ENCODE measurements at regions of chr17 and their contacts with region 1.

Region 1: DNA sequence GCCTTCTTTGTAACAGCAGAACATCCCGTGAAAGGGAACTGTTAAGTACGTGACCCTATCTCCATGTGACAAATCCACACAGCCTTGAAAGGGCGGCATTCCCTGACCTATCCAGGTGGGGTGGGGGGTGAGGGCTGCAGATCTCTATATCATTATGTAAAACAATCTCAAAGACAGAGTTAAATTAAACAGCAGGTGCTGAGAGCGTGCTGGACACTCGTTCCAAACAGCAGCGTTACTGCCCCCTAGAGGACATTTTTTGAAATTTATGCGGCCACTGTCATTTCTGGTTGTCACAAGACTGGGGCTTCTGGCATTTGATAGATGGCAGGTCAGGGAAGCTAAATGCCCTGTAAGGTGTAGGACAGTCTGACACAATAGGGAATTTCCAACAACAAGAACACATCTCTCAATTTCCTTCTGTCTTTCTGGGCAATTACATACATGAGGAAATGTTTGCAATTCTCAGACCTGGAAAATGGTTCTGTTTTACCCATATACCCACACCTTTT is 6.7 kb upstream of the SLC25A39 start:
- H3K4me3 ChIP-seq: no peak overlapping the region
- H3K27ac ChIP-seq: no peak overlapping the region
- H3K4me1 ChIP-seq: peaks cover 4% of the 10 kb centered on the region
- CTCF ChIP-seq: 0 out of 2 replicates have a peak, but pooled peaks have one; percentile 47

Region 2: GRCh38 chr17:44210342-44211192 is 120.7 kb before region 1 on chr17:
- CTCF ChIA-PET with region 1: interaction called, 33 read pairs
- POLR2A ChIA-PET with region 1: interaction called, 4 read pairs
- H3K4me3 ChIP-seq: no peak overlapping the region
- H3K27ac ChIP-seq: no peak overlapping the region; the same call in 1 of the 2 replicates
- H3K4me1 ChIP-seq: no peaks in the 10 kb centered on the region
- CTCF ChIP-seq: peak; percentile 78

Region 3: DNA sequence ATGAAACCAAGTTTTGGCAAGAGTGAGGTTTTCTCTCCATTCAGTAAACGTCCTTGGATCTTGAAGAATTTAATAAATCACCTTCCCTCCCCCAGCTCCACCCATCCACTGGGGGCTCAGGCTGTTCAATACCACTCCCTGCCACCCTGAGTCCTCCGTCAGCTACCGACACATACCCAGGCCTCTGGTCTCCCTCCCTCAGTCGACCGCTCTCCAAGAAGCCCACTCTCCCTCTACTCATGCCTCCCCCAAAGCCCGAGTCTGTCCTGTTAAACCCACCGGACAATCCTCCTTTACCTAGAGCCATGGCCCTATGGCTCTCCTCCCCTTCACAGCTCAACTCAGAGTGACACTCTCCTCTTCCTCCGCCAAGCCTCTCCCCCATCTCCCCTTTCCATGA is 43.7 kb before region 1 on chr17:
- CTCF ChIA-PET with region 1: interaction called, 15 read pairs
- POLR2A ChIA-PET with region 1: no interaction called
- H3K4me3 ChIP-seq: no peak overlapping the region
- H3K27ac ChIP-seq: no peak overlapping the region
- H3K4me1 ChIP-seq: no peaks in the 10 kb centered on the region
- CTCF ChIP-seq: no peak

Region 4: DNA sequence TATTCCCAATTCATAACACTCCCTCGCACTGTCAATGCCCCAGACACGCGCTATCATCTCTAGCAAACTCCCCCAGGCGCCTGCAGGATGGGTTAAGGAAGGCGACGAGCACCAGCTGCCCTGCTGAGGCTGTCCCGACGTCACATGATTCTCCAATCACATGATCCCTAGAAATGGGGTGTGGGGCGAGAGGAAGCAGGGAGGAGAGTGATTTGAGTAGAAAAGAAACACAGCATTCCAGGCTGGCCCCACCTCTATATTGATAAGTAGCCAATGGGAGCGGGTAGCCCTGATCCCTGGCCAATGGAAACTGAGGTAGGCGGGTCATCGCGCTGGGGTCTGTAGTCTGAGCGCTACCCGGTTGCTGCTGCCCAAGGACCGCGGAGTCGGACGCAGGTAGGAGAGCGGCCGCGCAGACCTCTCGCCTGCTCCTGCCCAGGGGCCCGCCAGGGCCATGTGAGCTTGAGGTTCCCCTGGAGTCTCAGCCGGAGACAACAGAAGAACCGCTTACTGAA is 13.7 kb after region 1 on chr17 and contains the start of gene GRN:
- CTCF ChIA-PET with region 1: interaction called, 27 read pairs
- POLR2A ChIA-PET with region 1: interaction called, 11 read pairs
- H3K4me3 ChIP-seq: peak within 1 kb of the TSS; percentile 82
- H3K27ac ChIP-seq: peak within 1 kb of the TSS; percentile 40; the same call in 1 of the 2 replicates
- H3K4me1 ChIP-seq: no peaks in the 10 kb centered on the region
- CTCF ChIP-seq: no peak

Region 5: DNA sequence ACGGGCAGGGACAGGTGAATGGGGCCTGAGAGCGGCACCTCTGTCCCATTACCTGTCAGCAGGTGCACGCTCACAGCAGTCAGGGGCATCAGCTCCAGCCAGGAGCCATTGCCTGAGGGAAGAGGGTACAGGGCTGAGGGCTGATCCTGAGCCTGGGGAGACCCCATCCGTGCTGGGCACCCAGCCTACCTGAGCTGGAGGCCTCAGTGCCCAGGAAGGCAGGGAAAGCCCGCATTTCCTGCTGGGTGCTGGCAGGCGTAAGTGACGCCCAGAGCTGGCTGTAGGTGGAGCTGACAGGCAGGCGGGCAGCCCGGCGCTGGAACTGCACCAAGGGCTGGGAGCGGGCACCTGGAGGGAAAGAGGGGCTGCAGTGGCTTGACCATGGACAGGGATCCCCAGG is 24.9 kb after region 1 on chr17:
- CTCF ChIA-PET with region 1: interaction called, 10 read pairs
- POLR2A ChIA-PET with region 1: no interaction called
- H3K4me3 ChIP-seq: no peak overlapping the region
- H3K27ac ChIP-seq: no peak overlapping the region
- H3K4me1 ChIP-seq: peaks cover 6% of the 10 kb centered on the region
- CTCF ChIP-seq: no peak